Natural killer cell (primary cell): ENCODE measurements at regions of chr19 and their contacts with region 1.

Region 1: DNA sequence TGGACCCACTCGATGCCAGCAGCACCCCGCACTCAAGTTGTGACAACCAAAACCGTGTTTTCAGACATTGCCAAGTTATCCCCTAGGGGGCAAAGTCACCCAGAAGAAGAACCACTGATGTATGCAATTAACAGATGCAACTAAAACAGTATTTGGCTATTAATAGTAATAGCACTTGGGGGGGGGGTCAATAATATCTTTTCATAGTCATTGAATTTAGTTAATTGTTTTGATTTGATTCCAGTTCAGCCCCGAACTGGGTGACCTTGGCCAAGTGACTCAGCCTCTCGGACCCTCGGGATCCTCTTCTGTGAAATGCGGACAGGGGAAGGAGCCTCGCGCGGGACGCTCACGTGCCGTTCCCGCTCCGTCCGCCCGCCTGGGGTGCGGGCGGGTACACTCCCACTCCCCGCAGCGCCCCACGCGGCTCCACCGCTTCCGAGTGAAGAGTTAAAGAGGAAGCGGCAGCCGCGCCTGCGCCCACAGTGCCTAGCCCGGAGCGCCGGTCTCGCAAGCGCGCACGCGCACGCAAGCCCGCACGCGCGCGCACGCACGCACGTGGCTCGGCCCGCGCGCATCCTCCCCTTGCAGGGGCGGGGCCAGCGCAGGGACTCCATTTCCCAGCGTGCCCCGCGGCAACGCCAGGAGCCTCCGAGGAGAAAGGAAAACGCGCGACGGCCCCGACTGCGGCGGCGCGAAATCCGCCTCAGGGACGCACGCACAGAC is 449 bp upstream of the DAZAP1 start:
- DNase-seq: peak; percentile 99 to 100
- ATAC-seq: peak; percentile 78 to 94 (median 81)
- H3K4me3 ChIP-seq: peak overlapping the region; percentile 51
- H3K4me3 Mint-ChIP-seq: peak overlapping the region; percentile 84
- H3K27ac ChIP-seq: peak overlapping the region; percentile 67
- H3K27ac Mint-ChIP-seq: peak overlapping the region; percentile 76 to 90
- H3K4me1 ChIP-seq: peaks cover 58% of the 10 kb centered on the region
- H3K4me1 Mint-ChIP-seq: peaks cover 52 to 54% of the 10 kb centered on the region in 2 donors
- H3K27me3 ChIP-seq: peaks cover 4% of the 10 kb centered on the region
- H3K27me3 Mint-ChIP-seq: peaks cover 0 to 3% of the 10 kb centered on the region in 2 donors
- CTCF ChIP-seq: peak; percentile 70

Region 2: GRCh38 chr19:796692-797527 is 610.0 kb before region 1 on chr19 and contains the start of gene PTBP1:
- intact Hi-C with region 1: loop called (anchors 2 kb)
- DNase-seq: peak; percentile 98 to 100
- ATAC-seq: peak; percentile 82 to 94 (median 84)
- H3K4me3 ChIP-seq: peak within 1 kb of the TSS; percentile 72
- H3K4me3 Mint-ChIP-seq: peak within 1 kb of the TSS; percentile 95
- H3K27ac ChIP-seq: peak within 1 kb of the TSS; percentile 65
- H3K27ac Mint-ChIP-seq: peak within 1 kb of the TSS; percentile 87 to 88
- H3K4me1 ChIP-seq: peaks cover 46% of the 10 kb centered on the region
- H3K4me1 Mint-ChIP-seq: peaks cover 42% of the 10 kb centered on the region in 2 donors
- H3K27me3 ChIP-seq: no peaks in the 10 kb centered on the region
- H3K27me3 Mint-ChIP-seq: no peaks in the 10 kb centered on the region
- CTCF ChIP-seq: no peak
- total RNA-seq, gene PTBP1: 302 to 350 (median 345) TPM

Region 3: GRCh38 chr19:1383311-1384084 is 23.4 kb before region 1 on chr19 and contains the start of gene NDUFS7:
- intact Hi-C with region 1: loop called (anchors 1 kb)
- DNase-seq: peak; percentile 96 to 98
- ATAC-seq: peak; percentile 84 to 94 (median 86)
- H3K4me3 ChIP-seq: peak within 1 kb of the TSS; percentile 94
- H3K4me3 Mint-ChIP-seq: peak within 1 kb of the TSS; percentile 97
- H3K27ac ChIP-seq: peak within 1 kb of the TSS; percentile 93
- H3K27ac Mint-ChIP-seq: peak within 1 kb of the TSS; percentile 100
- H3K4me1 ChIP-seq: peaks cover 18% of the 10 kb centered on the region
- H3K4me1 Mint-ChIP-seq: peaks cover 17 to 31% of the 10 kb centered on the region in 2 donors
- H3K27me3 ChIP-seq: no peaks in the 10 kb centered on the region
- H3K27me3 Mint-ChIP-seq: peaks cover 6% of the 10 kb centered on the region in 2 donors
- CTCF ChIP-seq: no peak
- total RNA-seq, gene NDUFS7: 60.8 to 67.9 (median 66.6) TPM

Region 4: DNA sequence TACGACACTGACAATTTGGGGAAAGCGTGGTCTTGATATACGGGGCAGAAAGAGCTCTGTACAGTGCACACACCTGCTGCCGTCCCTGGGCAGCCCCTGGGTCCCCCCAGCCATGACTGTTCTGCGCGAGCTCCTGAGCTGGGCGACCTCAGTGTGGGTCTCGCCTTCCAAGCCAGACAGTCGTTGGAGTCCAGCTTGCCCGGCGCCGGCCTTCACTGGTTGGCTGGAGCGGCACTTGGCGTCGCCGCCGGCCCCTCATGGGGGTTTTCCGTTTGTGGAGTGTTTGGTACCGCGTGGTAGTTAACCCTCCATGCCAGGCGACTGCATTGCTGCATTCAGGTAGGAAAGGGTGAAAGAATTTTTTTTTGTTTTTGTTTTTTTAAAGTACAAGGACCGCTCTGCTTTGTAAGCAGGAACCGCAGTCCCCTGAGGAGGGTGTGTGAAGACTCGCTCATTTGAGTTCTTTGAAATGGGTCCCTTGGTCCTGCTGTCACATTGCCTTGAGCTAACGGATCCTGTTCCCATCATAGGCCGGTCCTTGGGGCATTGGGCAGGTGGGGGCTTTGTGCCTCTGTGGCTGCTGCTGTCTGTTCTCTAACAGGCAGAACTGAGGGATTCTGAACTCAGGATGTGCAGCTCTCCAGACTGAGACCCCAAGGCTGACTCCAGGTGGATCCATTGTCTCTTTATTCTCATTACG is 20.4 kb after region 1 on chr19:
- intact Hi-C with region 1: no loop called
- DNase-seq: no peak
- ATAC-seq: no peak
- H3K4me3 ChIP-seq: no peak overlapping the region
- H3K4me3 Mint-ChIP-seq: no peak overlapping the region
- H3K27ac ChIP-seq: no peak overlapping the region
- H3K27ac Mint-ChIP-seq: no peak overlapping the region
- H3K4me1 ChIP-seq: no peaks in the 10 kb centered on the region
- H3K4me1 Mint-ChIP-seq: peaks cover 0 to 4% of the 10 kb centered on the region in 2 donors
- H3K27me3 ChIP-seq: no peaks in the 10 kb centered on the region
- H3K27me3 Mint-ChIP-seq: no peaks in the 10 kb centered on the region
- CTCF ChIP-seq: no peak

Region 5: GRCh38 chr19:1438035-1438932 is 31.3 kb after region 1 on chr19 and contains the start of gene RPS15:
- intact Hi-C with region 1: loop called (anchors 1 kb)
- DNase-seq: peak; percentile 96 to 99
- ATAC-seq: peak; percentile 88 to 97 (median 93)
- H3K4me3 ChIP-seq: peak within 1 kb of the TSS; percentile 88
- H3K4me3 Mint-ChIP-seq: peak within 1 kb of the TSS; percentile 95
- H3K27ac ChIP-seq: peak within 1 kb of the TSS; percentile 85
- H3K27ac Mint-ChIP-seq: peak within 1 kb of the TSS; percentile 91 to 100
- H3K4me1 ChIP-seq: peaks cover 31% of the 10 kb centered on the region
- H3K4me1 Mint-ChIP-seq: peaks cover 11 to 25% of the 10 kb centered on the region in 2 donors
- H3K27me3 ChIP-seq: no peaks in the 10 kb centered on the region
- H3K27me3 Mint-ChIP-seq: no peaks in the 10 kb centered on the region
- CTCF ChIP-seq: peak; percentile 92
- total RNA-seq, gene RPS15: 731 to 872 (median 837) TPM

Region 6: GRCh38 chr19:1449467-1450442 is 42.8 kb after region 1 on chr19 and contains the start of gene APC2:
- intact Hi-C with region 1: no loop called
- DNase-seq: peak in 1 of 2 donors; percentile 63
- ATAC-seq: peak in 1 of 3 donors; percentile 39
- H3K4me3 ChIP-seq: no peak within 1 kb of the TSS
- H3K4me3 Mint-ChIP-seq: peak within 1 kb of the TSS; percentile 65
- H3K27ac ChIP-seq: no peak within 1 kb of the TSS
- H3K27ac Mint-ChIP-seq: no peak within 1 kb of the TSS
- H3K4me1 ChIP-seq: peaks cover 24% of the 10 kb centered on the region
- H3K4me1 Mint-ChIP-seq: peaks cover 6 to 32% of the 10 kb centered on the region in 2 donors
- H3K27me3 ChIP-seq: peaks cover 59% of the 10 kb centered on the region
- H3K27me3 Mint-ChIP-seq: peaks cover 30 to 33% of the 10 kb centered on the region in 2 donors
- CTCF ChIP-seq: no peak
- total RNA-seq, gene APC2: 0.14 to 0.58 (median 0.27) TPM

Region 7: GRCh38 chr19:1503089-1503933 is 96.4 kb after region 1 on chr19:
- intact Hi-C with region 1: no loop called
- DNase-seq: peak; percentile 56 to 79
- ATAC-seq: peak in 2 of 3 donors; percentile 17 to 19
- H3K4me3 ChIP-seq: no peak overlapping the region
- H3K4me3 Mint-ChIP-seq: no peak overlapping the region
- H3K27ac ChIP-seq: no peak overlapping the region
- H3K27ac Mint-ChIP-seq: no peak overlapping the region
- H3K4me1 ChIP-seq: peaks cover 24% of the 10 kb centered on the region
- H3K4me1 Mint-ChIP-seq: peaks cover 10 to 16% of the 10 kb centered on the region in 2 donors
- H3K27me3 ChIP-seq: peaks cover 11% of the 10 kb centered on the region
- H3K27me3 Mint-ChIP-seq: peaks cover 9 to 22% of the 10 kb centered on the region in 2 donors
- CTCF ChIP-seq: peak; percentile 79

Region 8: DNA sequence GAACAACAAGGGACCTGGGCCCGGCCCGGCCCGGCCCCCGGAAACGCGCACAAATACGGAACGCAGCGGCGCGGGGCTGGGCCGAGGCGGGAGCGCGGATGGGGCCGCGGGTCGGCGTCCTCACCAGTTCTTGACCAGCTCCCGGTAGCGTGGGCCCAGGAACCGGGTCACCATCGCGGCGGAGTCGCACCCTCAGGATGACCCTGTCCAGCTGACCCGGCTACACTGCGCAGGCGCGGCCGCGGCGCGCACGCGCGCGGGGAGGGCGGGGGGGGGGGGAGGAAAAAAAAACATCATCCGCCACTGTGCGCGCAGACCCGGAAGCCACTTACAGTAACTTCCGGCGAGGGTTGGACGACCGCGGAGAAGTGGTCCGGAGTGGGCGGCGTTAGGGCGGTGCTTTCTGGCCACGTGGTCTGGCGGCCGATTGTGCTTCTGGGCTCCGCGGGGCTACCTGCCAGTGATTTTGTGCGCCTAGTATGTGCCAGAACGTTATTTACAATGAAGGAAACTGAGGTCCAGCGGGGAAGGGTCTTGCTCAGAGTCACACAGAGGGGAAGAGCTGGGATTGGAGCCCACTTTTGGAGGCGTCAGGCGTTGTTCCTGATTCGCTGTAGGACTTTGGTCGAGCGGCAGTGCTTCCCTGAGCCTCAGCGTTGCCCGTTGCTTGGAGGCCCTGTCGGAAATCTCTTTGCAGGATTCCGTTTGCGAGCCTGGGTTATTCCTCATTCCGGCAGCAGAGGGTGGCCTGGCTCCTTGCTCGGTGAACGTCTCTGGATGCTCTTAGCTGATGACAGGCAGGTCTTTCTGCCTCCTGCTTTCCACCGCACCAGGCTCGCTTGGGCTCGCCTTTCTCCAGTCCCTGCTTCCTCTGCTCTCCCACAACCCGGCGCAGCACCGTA is 198.6 kb after region 1 on chr19 and contains the start of gene UQCR11:
- intact Hi-C with region 1: loop called (anchors 10 kb)
- DNase-seq: peak; percentile 91 to 96
- ATAC-seq: peak; percentile 84 to 94 (median 92)
- H3K4me3 ChIP-seq: peak within 1 kb of the TSS; percentile 95
- H3K4me3 Mint-ChIP-seq: peak within 1 kb of the TSS; percentile 97
- H3K27ac ChIP-seq: peak within 1 kb of the TSS; percentile 88
- H3K27ac Mint-ChIP-seq: peak within 1 kb of the TSS; percentile 97 to 98
- H3K4me1 ChIP-seq: peaks cover 65% of the 10 kb centered on the region
- H3K4me1 Mint-ChIP-seq: peaks cover 30 to 40% of the 10 kb centered on the region in 2 donors
- H3K27me3 ChIP-seq: no peaks in the 10 kb centered on the region
- H3K27me3 Mint-ChIP-seq: no peaks in the 10 kb centered on the region
- CTCF ChIP-seq: peak; percentile 22
- total RNA-seq, gene UQCR11: 91.2 to 142 (median 99.1) TPM